Prostate gland (tissue), 2 donors: ENCODE measurements at regions of chr20 and their contacts with region 1.

Region 1: GRCh38 chr20:59222253-59223181 is 58.9 kb downstream of the ZNF831 start:
- DNase-seq: peak; percentile 65
- H3K4me3 ChIP-seq: peak overlapping the region; percentile 38 to 47
- H3K27ac ChIP-seq: peak overlapping the region in 1 of 2 donors; percentile 55
- H3K4me1 ChIP-seq: no peaks in the 10 kb centered on the region
- H3K27me3 ChIP-seq: no peaks in the 10 kb centered on the region
- CTCF ChIP-seq: peak; percentile 86 to 91 (median 88)
- POLR2A ChIP-seq: no peak

Region 2: DNA sequence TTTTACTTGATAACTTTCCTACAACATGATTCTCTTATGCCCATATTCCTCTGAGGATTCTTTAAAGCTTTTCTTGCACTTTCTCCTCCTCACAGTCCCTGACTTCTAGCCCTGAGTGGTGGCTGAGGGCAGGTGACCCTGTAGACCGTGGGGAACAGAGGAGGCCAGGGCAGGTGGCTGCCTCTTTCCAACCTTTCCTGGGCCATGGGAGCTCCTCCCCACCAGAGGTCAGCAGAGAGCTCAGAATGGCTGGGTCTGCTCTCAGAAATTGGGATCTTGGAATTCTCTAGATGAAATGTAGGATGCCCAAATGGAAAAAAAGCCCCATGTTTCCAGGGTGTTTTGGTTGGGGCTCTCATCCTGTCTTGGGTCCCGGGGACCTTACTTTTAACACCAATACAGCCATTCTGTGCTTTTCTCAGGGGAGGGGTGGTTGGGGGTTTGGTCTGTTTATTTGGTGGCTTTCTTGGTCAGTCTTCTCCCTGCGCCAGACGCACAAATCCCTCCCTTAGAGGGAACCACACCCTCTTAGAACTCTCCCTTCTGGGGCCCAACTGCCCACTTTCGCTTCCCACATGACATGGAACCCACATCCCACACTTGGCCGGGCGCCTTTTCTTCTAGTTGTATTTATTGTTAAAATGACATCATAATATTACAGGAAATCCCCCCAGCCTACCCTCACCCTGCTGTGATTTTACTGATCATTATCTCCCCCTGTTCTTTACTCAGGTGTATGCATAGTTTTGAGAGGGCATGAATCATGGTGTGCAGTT is 352.1 kb before region 1 on chr20:
- intact Hi-C with region 1: loop called (anchors 2 kb)
- DNase-seq: peak; percentile 63
- H3K4me3 ChIP-seq: no peak overlapping the region
- H3K27ac ChIP-seq: no peak overlapping the region
- H3K4me1 ChIP-seq: no peaks in the 10 kb centered on the region
- H3K27me3 ChIP-seq: no peaks in the 10 kb centered on the region
- CTCF ChIP-seq: peak; percentile 63 to 86 (median 83)
- POLR2A ChIP-seq: no peak

Region 3: GRCh38 chr20:59087829-59088433 is 134.6 kb before region 1 on chr20:
- intact Hi-C with region 1: loop called (anchors 2 kb)
- DNase-seq: peak; percentile 78
- H3K4me3 ChIP-seq: no peak overlapping the region
- H3K27ac ChIP-seq: no peak overlapping the region
- H3K4me1 ChIP-seq: peaks cover 8% of the 10 kb centered on the region
- H3K27me3 ChIP-seq: no peaks in the 10 kb centered on the region
- CTCF ChIP-seq: peak; percentile 84 to 92 (median 85)
- POLR2A ChIP-seq: no peak

Region 4: DNA sequence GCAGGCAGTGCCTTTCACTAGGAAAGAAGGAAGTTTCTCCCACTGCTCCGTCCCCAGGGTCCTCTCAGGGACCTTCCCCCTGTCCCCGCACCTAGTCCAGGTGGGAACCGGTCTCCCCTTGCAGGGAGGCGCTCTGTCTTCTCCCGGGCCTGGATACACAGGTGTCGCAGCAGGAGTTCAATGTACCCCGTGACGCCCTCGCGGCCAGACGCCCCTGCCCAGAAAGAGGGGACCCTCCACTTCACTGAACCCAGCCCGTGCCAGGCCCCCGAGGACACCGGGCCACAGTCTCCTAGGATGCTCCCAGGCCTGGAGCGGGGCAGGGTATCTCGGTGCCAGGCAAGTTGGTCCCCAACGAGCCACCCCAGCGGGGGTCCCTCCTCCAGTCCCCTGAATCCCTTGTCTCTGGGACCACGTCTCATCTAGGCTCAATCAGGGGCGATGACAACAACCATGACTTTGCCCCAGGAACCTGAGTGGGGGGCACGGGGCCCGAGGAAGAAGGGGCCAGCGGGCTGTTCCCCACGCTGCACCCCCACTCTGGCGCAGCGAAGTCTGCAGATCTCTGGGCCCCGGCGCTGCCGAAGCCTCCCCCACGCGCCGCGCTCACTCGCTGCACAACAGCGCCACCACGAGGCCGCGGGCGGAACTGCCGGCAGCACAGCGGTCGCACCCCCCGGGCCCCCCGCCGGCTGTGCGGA is 180.9 kb after region 1 on chr20:
- intact Hi-C with region 1: loop called (anchors 10 kb)
- DNase-seq: peak; percentile 15
- H3K4me3 ChIP-seq: peak overlapping the region in 1 of 2 donors; percentile 12
- H3K27ac ChIP-seq: no peak overlapping the region
- H3K4me1 ChIP-seq: no peaks in the 10 kb centered on the region
- H3K27me3 ChIP-seq: no peaks in the 10 kb centered on the region
- CTCF ChIP-seq: peak; percentile 92 to 94 (median 94)
- POLR2A ChIP-seq: no peak

Region 5: DNA sequence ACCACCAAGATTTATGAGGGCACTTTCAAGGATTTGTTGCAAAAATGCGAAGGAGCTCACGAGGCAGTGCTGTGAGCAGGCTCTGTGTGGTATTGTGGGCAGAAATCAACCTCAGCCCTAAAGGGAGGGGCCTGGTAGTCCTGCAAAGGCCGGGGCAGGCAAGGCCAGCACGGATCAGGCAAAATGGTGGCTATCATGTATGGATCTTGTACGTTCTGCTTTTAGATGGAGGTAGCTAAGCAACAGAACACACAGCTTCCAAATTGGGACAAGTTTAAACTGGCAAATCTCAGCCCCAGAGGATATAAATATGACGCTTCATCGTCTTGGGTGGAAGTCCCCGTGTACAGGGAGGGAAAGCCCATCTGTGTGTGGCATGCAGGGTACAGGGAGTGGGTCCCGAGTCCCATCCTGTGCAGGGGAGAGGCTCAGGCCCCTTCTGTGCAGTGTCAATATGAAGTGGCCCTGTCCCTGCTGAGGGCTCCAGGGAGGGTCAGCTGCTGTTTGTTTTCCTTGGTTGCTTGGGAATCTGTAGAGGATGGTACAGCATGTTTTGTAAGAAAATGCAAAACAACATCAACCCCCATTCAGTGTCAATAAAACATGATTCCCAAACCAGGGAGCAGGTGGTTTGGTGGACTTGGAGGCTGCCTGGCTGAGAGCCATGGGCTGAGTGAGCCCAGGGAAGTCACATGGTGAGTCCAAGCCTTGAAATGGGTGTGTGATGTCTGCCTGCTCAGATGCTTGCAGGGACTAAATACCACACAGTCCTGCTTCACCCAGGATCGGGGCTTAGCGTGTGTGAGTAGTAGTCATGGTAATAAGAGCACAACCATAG is 597.9 kb after region 1 on chr20:
- intact Hi-C with region 1: no loop called
- DNase-seq: no peak
- H3K4me3 ChIP-seq: no peak overlapping the region
- H3K27ac ChIP-seq: no peak overlapping the region
- H3K4me1 ChIP-seq: no peaks in the 10 kb centered on the region
- H3K27me3 ChIP-seq: no peaks in the 10 kb centered on the region
- CTCF ChIP-seq: no peak
- POLR2A ChIP-seq: no peak